ENCODE measurements at regions of chr14 and their contacts with region 1.

Region 1: GRCh38 chr14:95561001-95561412 is 26.2 kb downstream of the GLRX5 start:
- DNase-seq: peak; percentile 71
- ATAC-seq: peak; percentile 95
- H3K4me3 ChIP-seq: no peak overlapping the region
- H3K27ac ChIP-seq: no peak overlapping the region
- H3K4me1 ChIP-seq: peaks cover 6% of the 10 kb centered on the region; the same call in 1 of the 2 replicates
- H3K27me3 ChIP-seq: no peaks in the 10 kb centered on the region
- CTCF ChIP-seq: peak; percentile 94 to 100 (median 99)
- EP300 ChIP-seq: no peak
- POLR2A ChIP-seq: no peak
- RAD21 ChIP-seq: peak; percentile 97

Region 2: DNA sequence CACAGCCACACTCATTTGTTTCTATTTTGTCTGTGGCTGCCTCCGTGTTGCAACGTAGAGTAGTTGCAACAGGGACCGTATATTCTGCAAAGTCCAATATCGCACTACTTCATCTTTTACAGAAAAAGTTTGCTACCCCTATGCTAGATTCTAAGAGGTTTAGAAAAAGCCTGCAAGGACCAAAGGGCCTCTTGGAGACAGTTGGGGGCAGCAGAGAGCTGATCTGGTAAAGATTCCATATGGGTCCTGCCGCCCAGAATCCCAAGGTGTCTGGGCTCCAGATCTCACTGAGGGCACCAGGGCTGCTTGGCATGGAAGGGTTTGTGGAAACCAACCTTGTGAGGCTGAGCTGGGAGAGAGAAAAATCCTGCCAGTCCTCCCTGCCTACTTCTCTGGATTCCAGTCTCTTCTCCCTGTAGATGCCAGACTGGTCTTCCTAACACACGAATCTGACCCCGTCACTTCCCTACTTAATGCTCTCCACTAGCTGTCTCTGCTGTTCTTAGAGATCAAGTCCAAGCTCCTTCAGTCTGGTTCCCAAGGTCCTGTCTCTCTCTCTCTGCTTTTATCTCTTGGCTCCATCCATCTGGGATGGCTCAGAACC is 48.5 kb after region 1 on chr14:
- CTCF ChIA-PET with region 1: interaction called, 16 read pairs
- POLR2A ChIA-PET with region 1: no interaction called
- RAD21 ChIA-PET with region 1: interaction called, 5 read pairs
- SMC1A ChIA-PET with region 1: interaction called, 22 read pairs
- in situ Hi-C with region 1: no loop called
- intact Hi-C with region 1: loop called (anchors 1 kb)
- DNase-seq: no peak
- ATAC-seq: peak; percentile 83
- H3K4me3 ChIP-seq: no peak overlapping the region
- H3K27ac ChIP-seq: no peak overlapping the region
- H3K4me1 ChIP-seq: no peaks in the 10 kb centered on the region
- H3K27me3 ChIP-seq: no peaks in the 10 kb centered on the region; a peak in 1 of 4 replicates
- CTCF ChIP-seq: peak; percentile 67 to 71 (median 68)
- EP300 ChIP-seq: no peak
- POLR2A ChIP-seq: no peak
- RAD21 ChIP-seq: peak; percentile 84

Region 3: GRCh38 chr14:95713596-95714371 is 152.8 kb after region 1 on chr14 and contains the start of gene TCL1A:
- CTCF ChIA-PET with region 1: interaction called, 14 read pairs
- POLR2A ChIA-PET with region 1: no interaction called
- RAD21 ChIA-PET with region 1: interaction called, 4 read pairs
- SMC1A ChIA-PET with region 1: interaction called, 8 read pairs
- in situ Hi-C with region 1: no loop called
- intact Hi-C with region 1: no loop called
- DNase-seq: no peak
- ATAC-seq: peak; percentile 95
- H3K4me3 ChIP-seq: peak within 1 kb of the TSS; percentile 84
- H3K27ac ChIP-seq: peak within 1 kb of the TSS; percentile 85
- H3K4me1 ChIP-seq: peaks cover 13% of the 10 kb centered on the region
- H3K27me3 ChIP-seq: no peaks in the 10 kb centered on the region
- CTCF ChIP-seq: peak; percentile 50 to 58 (median 58)
- EP300 ChIP-seq: no peak
- POLR2A ChIP-seq: peak; percentile 100
- RAD21 ChIP-seq: peak; percentile 69
- polyA plus RNA-seq, gene TCL1A: 36.5 to 51.6 TPM

Region 4: GRCh38 chr14:95993768-95994592 is 433.0 kb after region 1 on chr14:
- CTCF ChIA-PET with region 1: interaction called, 75 read pairs
- POLR2A ChIA-PET with region 1: no interaction called
- RAD21 ChIA-PET with region 1: interaction called, 16 read pairs
- SMC1A ChIA-PET with region 1: interaction called, 52 read pairs
- in situ Hi-C with region 1: loop called (anchors 5 kb)
- intact Hi-C with region 1: loop called (anchors 1 kb)
- DNase-seq: peak; percentile 17
- ATAC-seq: peak; percentile 75
- H3K4me3 ChIP-seq: no peak overlapping the region
- H3K27ac ChIP-seq: no peak overlapping the region
- H3K4me1 ChIP-seq: no peaks in the 10 kb centered on the region
- H3K27me3 ChIP-seq: peaks cover 0 to 2% of the 10 kb centered on the region in 2 experiments; a peak in 2 of 4 replicates
- CTCF ChIP-seq: peak; percentile 78 to 80 (median 79)
- EP300 ChIP-seq: no peak
- POLR2A ChIP-seq: no peak
- RAD21 ChIP-seq: peak; percentile 93

Region 5: DNA sequence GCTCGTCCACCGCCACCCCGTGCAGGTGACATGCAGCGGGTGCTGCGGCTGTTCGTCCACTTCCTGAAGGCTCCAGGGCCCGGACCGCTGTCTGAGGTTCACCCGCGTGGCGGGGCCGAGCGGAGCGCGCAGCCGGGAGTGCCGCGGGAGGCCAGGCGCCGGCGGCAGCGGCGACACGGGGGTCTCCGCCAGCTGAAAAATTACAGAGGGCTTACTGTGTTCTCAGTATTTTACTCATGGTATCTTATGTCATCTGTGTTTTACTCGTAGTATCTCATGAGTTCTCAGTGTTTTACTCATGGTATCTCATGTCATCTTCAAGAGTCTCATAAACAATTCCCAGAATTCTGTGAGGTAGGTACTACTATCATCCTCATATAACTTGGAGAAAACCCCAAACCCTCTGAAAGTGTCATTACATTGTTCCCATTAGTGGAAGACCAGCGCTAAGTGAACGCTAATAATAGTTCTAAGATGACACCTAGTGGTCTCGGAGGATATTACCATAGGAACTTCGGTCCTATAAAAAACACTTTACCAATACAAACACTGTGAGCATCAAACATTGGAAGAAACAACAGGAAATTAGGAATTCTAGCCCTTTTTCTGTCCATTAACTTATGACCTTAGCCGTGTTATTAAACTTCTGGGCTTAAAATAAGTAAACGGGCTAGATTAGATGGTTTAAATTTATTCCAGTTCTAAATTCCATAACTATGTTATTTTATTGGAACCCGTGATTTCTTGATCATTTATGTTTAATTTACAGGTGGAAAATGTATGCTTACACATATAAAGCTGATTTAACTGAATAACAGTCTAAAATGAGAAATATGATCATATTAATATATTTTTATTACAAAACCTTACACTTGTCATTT is 863.3 kb after region 1 on chr14:
- CTCF ChIA-PET with region 1: no interaction called
- POLR2A ChIA-PET with region 1: no interaction called
- RAD21 ChIA-PET with region 1: no interaction called
- SMC1A ChIA-PET with region 1: no interaction called
- in situ Hi-C with region 1: no loop called
- intact Hi-C with region 1: loop called (anchors 5 kb)
- DNase-seq: peak; percentile 45
- ATAC-seq: peak; percentile 93
- H3K4me3 ChIP-seq: peak overlapping the region; percentile 64
- H3K27ac ChIP-seq: no peak overlapping the region
- H3K4me1 ChIP-seq: no peaks in the 10 kb centered on the region
- H3K27me3 ChIP-seq: no peaks in the 10 kb centered on the region
- CTCF ChIP-seq: peak; percentile 53 to 86 (median 66); a peak in 5 of 6 replicates
- EP300 ChIP-seq: no peak
- POLR2A ChIP-seq: no peak
- RAD21 ChIP-seq: peak; percentile 91